Activated CD4-positive, alpha-beta memory T cell treated with anti-CD3 and anti-CD28 coated beads, Interleukin-2, amount 10 ng/mL, durations not matched to agents 7 days and 5 days (primary cell): ENCODE measurements at regions of chr20 and their contacts with region 1.

Region 1: DNA sequence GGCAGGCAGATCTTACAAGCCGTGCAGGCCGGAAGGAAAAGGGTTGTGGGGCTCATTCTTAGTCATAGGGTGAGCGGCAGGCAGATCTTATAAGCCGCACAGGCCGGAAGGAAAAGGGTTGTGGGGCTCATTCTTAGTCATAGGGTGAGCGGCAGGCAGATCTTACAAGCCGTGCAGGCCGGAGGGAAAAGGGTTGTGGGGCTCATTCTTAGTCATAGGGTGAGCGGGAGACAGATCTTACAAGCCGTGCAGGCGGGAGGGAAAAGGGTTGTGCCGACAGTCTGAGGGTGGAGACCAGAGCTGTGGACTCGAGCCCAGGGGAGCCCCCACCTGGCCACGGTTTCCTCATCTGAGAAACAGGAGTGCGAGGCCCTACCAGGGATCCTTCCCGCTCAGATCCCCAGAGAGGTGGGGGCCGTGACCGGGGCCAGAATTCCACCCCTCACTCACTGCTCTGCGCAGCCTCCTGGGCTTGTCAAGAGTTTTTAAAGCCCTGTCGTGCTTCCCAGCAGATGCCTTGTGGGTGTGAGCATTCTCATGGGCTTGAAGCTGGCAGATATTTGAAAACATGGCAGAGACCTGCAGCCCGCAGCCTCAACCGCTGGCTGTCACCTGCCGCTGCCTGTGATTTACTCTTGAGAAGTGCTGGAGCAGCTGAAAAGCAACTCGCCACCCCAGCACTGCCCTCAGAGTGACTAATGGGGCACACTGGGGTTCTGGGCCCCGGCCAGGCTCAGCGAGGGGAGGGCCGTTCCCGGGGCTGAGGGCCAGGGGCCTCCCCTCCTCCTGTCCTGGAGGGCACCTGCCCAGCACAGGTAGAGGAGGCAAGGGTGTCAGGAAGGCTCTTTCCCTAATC is 31.9 kb downstream of the NTSR1 start:
- DNase-seq: peak; percentile 95
- H3K4me3 Mint-ChIP-seq: peak overlapping the region; percentile 63
- H3K27ac Mint-ChIP-seq: peak overlapping the region; percentile 95
- H3K4me1 Mint-ChIP-seq: peaks cover 56% of the 10 kb centered on the region
- H3K27me3 Mint-ChIP-seq: peaks cover 27% of the 10 kb centered on the region

Region 2: GRCh38 chr20:62752671-62753501 is 12.4 kb after region 1 on chr20:
- CTCF ChIA-PET with region 1: no interaction called
- POLR2A ChIA-PET with region 1: interaction called, 12 read pairs
- DNase-seq: no peak
- H3K4me3 Mint-ChIP-seq: no peak overlapping the region
- H3K27ac Mint-ChIP-seq: no peak overlapping the region
- H3K4me1 Mint-ChIP-seq: no peaks in the 10 kb centered on the region
- H3K27me3 Mint-ChIP-seq: peaks cover 36% of the 10 kb centered on the region

Region 3: DNA sequence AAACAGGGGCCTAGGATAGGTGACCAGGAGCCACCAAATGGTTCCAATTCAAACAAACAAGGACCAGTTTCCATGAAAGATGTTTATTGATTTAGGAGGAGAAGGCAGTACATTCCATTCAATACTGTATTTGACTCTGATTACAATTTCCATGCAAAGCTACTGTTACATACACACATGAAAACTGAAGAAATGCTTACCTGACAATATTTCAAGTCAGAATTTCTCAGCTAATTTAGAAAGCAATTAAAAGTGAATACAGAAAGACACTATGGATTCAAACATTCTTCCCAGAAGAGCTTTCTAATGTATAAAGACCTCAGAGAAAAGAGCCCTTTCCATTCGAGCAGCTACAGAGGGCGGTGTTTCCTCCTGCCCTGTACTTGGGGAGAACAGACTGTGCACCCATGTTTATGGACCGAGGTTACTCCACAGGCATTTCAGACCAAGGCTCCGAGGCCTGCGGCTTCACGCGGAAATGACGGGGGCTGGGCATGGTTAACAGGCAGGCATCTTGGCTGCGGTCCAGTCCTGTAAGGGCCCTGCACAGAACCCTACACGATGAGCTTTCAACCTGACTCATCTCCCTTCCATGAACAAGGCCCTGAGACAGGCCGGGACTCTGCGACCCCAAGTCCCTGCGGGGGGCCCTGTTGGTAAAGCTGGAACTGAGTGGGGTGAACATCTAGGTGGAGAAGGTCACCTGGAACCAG is 146.8 kb after region 1 on chr20:
- CTCF ChIA-PET with region 1: no interaction called
- POLR2A ChIA-PET with region 1: no interaction called
- DNase-seq: peak; percentile 42
- H3K4me3 Mint-ChIP-seq: no peak overlapping the region
- H3K27ac Mint-ChIP-seq: peak overlapping the region; percentile 47
- H3K4me1 Mint-ChIP-seq: peaks cover 26% of the 10 kb centered on the region
- H3K27me3 Mint-ChIP-seq: no peaks in the 10 kb centered on the region